ENCODE measurements at regions of chr7 and their contacts with region 1.

Region 1: DNA sequence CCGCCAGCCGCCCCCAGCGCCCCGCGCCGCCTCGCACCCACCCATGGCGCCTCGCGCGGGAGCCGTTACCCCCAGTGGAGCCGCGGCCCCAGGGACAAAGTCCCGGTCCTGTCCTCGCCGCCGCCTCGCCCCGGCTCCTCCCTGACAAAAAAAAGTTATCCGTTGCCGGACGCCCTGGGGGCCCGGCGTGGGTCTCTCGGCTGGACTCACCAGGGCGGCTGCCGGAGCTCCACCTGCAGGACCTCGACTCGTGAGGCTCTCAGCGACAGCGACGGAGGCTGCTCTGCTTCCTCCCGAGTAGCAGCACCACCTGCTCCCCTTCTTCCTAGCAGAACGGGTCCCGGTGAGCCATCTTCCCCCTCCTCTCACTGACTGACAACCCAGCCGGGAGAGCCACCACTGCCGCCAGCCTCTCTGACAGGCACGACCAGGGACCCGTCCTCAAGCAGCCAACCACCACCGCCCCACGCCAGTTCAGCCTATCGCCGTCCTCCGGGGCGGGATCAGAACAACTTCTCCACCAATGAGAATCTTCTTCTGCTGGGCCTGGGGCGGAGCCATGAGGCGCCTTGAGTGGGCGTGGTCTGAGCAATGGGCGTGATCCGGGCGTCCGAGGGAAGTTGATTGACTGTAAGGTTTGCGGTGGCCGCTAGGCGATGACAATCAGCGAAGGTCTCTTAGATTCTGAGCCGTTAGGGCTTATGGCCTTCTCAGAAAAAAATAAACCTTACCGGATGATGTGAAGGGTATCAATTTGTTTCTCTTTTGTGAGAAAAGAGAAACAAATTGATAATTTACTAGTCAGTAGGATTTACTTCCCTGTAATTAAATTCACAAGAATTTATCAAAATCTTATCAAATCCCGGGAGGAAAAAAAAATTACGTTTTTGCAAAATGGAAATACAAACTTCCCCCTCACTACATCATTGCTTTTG is at the start of gene HYCC1:
- DNase-seq: peak; percentile 100
- H3K4me3 Mint-ChIP-seq: peak within 1 kb of the TSS; percentile 94
- H3K27ac Mint-ChIP-seq: peak within 1 kb of the TSS; percentile 80
- H3K4me1 Mint-ChIP-seq: peaks cover 17% of the 10 kb centered on the region
- H3K27me3 Mint-ChIP-seq: no peaks in the 10 kb centered on the region
- total RNA-seq, gene HYCC1: 20.7 to 23.9 TPM

Region 2: DNA sequence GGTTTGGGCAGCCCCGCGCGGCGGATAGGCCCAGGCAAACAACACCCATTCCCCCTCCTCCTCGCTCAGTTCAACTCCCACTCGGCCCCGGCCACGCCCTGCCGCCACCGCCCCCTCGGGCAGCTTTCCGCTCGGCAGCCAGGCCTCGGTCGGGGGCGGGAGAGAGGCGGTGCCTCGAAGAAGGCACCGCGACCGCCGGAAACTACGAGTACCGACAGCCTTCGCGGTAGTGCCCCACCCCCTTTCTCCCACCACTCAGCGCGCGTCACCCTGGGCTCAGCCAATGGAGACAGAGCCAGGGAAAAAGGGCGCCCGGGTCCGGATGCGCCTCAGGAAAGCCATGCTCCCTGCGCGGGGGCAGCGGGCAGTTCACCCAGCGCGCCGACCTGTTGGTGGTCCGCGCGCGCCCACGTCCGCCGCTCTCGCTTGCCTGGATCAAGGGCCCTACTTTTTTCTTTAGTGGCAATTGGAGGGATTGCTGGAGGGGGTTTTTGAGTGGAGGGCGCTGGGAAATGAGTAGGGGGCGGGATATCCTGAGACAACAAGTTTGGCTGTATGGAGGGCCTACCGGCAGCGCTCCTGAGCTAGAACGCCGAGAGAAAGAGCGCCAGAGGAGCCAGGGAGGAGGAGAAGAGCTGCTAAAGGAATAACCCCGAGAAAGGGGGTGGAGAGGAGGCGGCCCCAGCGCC is 1586.7 kb before region 1 on chr7:
- CTCF ChIA-PET with region 1: no interaction called
- POLR2A ChIA-PET with region 1: no interaction called
- intact Hi-C with region 1: loop called (anchors 5 kb)
- DNase-seq: peak; percentile 99
- H3K4me3 Mint-ChIP-seq: peak overlapping the region; percentile 98
- H3K27ac Mint-ChIP-seq: peak overlapping the region; percentile 99
- H3K4me1 Mint-ChIP-seq: peaks cover 37% of the 10 kb centered on the region
- H3K27me3 Mint-ChIP-seq: no peaks in the 10 kb centered on the region

Region 3: GRCh38 chr7:22559829-22560489 is 454.0 kb before region 1 on chr7:
- CTCF ChIA-PET with region 1: interaction called, 3 read pairs
- POLR2A ChIA-PET with region 1: no interaction called
- intact Hi-C with region 1: loop called (anchors 5 kb)
- DNase-seq: peak; percentile 77
- H3K4me3 Mint-ChIP-seq: no peak overlapping the region
- H3K27ac Mint-ChIP-seq: no peak overlapping the region
- H3K4me1 Mint-ChIP-seq: peaks cover 39% of the 10 kb centered on the region
- H3K27me3 Mint-ChIP-seq: peaks cover 9% of the 10 kb centered on the region

Region 4: GRCh38 chr7:22854158-22855048 is 159.6 kb before region 1 on chr7:
- CTCF ChIA-PET with region 1: no interaction called
- POLR2A ChIA-PET with region 1: no interaction called
- intact Hi-C with region 1: loop called (anchors 1 kb)
- DNase-seq: no peak
- H3K4me3 Mint-ChIP-seq: peak overlapping the region; percentile 93
- H3K27ac Mint-ChIP-seq: peak overlapping the region; percentile 93
- H3K4me1 Mint-ChIP-seq: peaks cover 34% of the 10 kb centered on the region
- H3K27me3 Mint-ChIP-seq: peaks cover 2% of the 10 kb centered on the region

Region 5: GRCh38 chr7:22885797-22886261 is 128.2 kb before region 1 on chr7:
- CTCF ChIA-PET with region 1: no interaction called
- POLR2A ChIA-PET with region 1: no interaction called
- intact Hi-C with region 1: loop called (anchors 1 kb)
- DNase-seq: peak; percentile 81
- H3K4me3 Mint-ChIP-seq: peak overlapping the region; percentile 45
- H3K27ac Mint-ChIP-seq: peak overlapping the region; percentile 88
- H3K4me1 Mint-ChIP-seq: peaks cover 39% of the 10 kb centered on the region
- H3K27me3 Mint-ChIP-seq: no peaks in the 10 kb centered on the region

Region 6: GRCh38 chr7:23136216-23136615 is 122.2 kb after region 1 on chr7:
- CTCF ChIA-PET with region 1: no interaction called
- POLR2A ChIA-PET with region 1: no interaction called
- intact Hi-C with region 1: no loop called
- DNase-seq: no peak
- H3K4me3 Mint-ChIP-seq: no peak overlapping the region
- H3K27ac Mint-ChIP-seq: no peak overlapping the region
- H3K4me1 Mint-ChIP-seq: no peaks in the 10 kb centered on the region
- H3K27me3 Mint-ChIP-seq: no peaks in the 10 kb centered on the region

Region 7: GRCh38 chr7:23181684-23182553 is 167.9 kb after region 1 on chr7 and contains the start of gene NUP42:
- CTCF ChIA-PET with region 1: no interaction called
- POLR2A ChIA-PET with region 1: no interaction called
- intact Hi-C with region 1: loop called (anchors 2 kb)
- DNase-seq: peak; percentile 99
- H3K4me3 Mint-ChIP-seq: peak within 1 kb of the TSS; percentile 87
- H3K27ac Mint-ChIP-seq: peak within 1 kb of the TSS; percentile 95
- H3K4me1 Mint-ChIP-seq: peaks cover 31% of the 10 kb centered on the region
- H3K27me3 Mint-ChIP-seq: no peaks in the 10 kb centered on the region
- total RNA-seq, gene NUP42: 24.1 to 31.7 TPM

Measured in activated CD4-positive, alpha-beta memory T cell treated with anti-CD3 and anti-CD28 coated beads for 36 hours (primary cell).